PC-9 (cell line): ENCODE measurements at regions of chr16 and their contacts with region 1.

Region 1: DNA sequence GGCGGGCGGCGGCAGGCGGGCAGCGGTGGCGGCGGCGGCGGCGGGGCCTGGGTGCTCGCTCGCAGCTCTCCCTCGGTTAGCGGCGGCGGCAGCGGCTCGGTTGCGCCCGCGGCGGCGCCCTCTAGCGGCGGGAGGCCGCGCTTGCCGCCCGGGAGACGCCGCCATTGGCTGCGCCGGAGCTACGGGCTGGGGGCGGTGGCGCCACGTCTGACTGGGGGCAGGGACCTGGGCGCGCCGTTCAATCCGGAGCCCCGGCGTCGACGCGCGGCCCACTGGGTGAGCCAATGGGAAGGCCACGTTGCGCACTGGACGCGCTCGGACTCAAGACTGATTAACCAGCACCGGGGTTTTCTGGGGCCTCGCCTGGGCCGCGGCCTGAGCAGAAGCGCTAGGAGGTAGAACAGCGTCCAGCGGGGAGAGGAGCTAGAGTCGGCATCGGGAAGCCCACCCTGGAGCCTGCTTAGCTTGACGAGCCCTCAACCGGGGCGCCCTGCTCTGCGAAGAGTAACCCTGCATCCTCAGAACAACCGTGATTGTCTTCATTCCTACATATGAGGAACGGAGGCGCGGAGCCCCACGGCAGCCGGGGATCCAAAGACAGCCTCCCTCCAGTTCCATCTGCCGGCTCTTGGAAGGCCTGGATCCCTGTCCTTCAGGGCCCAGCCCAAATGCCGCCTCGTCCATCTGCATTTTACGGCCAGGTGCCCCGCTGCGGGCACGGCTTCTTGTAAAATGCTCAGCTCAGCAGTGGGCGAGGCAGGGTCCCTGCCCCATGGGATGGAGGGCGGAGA is at the start of gene ZC3H7A:
- DNase-seq: peak; percentile 89 to 98
- H3K4me3 ChIP-seq: peak within 1 kb of the TSS; percentile 97
- H3K27ac ChIP-seq: peak within 1 kb of the TSS; percentile 73
- H3K4me1 ChIP-seq: peaks cover 15% of the 10 kb centered on the region
- H3K27me3 ChIP-seq: no peaks in the 10 kb centered on the region
- CTCF ChIP-seq: no peak; the same call in 1 of the 2 replicates
- total RNA-seq, gene ZC3H7A: 52.3 and 63.5 TPM in 2 replicates

Region 2: DNA sequence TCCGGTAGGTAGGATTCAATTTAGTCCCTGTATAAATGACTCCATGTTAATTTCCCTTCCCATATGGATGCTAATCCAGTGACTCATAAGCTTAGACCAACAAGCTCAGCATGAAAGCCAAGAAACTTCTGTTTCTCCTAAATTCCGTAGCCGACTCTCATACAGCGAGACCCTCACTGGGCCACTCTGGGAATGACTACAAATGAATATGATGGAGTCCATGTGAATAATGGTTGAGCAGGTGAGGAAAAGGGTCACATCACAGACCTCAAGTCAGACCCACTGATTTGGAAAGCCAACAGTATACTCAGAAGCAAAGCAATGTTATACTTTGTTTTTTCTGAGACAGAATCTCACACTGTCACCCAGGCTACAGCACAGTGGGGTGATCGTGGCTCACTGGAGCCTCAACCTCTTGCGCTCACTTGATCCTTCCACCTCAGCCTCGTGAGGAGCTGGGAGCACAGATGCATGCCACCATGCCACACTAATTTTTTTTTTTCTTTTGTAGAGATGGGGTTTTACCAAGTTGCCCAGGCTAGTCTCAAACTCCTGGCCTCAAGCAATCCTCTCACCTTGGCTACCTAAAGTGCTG is 39.4 kb after region 1 on chr16:
- CTCF ChIA-PET with region 1: no interaction called
- POLR2A ChIA-PET with region 1: no interaction called
- intact Hi-C with region 1: loop called (anchors 1 kb)
- DNase-seq: no peak
- H3K4me3 ChIP-seq: no peak overlapping the region
- H3K27ac ChIP-seq: no peak overlapping the region
- H3K4me1 ChIP-seq: 0 out of 2 replicates have a peak, but pooled peaks cover 8% of the 10 kb centered on the region
- H3K27me3 ChIP-seq: no peaks in the 10 kb centered on the region
- CTCF ChIP-seq: no peak

Region 3: DNA sequence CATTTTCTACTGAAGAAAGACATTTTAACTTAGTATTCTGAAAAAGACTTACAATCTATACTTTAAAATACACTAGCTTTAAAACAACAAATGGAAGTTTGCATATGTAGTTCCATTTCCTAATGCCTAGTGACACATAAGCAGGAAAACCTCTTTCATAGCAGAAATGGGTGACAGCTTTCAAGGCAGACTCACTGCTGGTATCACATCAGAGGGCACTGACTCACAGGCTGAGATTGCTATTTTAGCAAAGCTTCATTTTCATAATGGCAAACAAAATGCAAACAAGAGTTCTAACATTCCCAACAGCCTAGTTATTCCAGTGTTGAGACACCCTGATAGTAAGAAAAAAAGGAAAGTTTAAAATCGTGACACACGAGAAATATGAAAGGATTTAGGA is 99.4 kb after region 1 on chr16:
- CTCF ChIA-PET with region 1: no interaction called
- POLR2A ChIA-PET with region 1: no interaction called
- intact Hi-C with region 1: no loop called
- DNase-seq: peak in 1 of 2 experiments; percentile 46
- H3K4me3 ChIP-seq: no peak overlapping the region
- H3K27ac ChIP-seq: no peak overlapping the region
- H3K4me1 ChIP-seq: no peaks in the 10 kb centered on the region
- H3K27me3 ChIP-seq: no peaks in the 10 kb centered on the region
- CTCF ChIP-seq: no peak